Mammary epithelial cell (primary cell): ENCODE measurements at regions of chr16 and their contacts with region 1.

Region 1: GRCh38 chr16:15949210-15950160 is at the start of gene ABCC1:
- DNase-seq: peak; percentile 38
- H3K4me3 ChIP-seq: peak within 1 kb of the TSS; percentile 71 to 90 (median 79)
- H3K27ac ChIP-seq: peak within 1 kb of the TSS; percentile 87
- H3K4me1 ChIP-seq: peaks cover 27% of the 10 kb centered on the region
- H3K27me3 ChIP-seq: no peaks in the 10 kb centered on the region
- CTCF ChIP-seq: no peak
- total RNA-seq, gene ABCC1: 45.5 to 47.2 TPM

Region 2: GRCh38 chr16:16021988-16022682 is 72.7 kb after region 1 on chr16:
- CTCF ChIA-PET with region 1: no interaction called
- dilution Hi-C with region 1: no loop called
- in situ Hi-C with region 1: no loop called
- intact Hi-C with region 1: loop called (anchors 5 kb)
- DNase-seq: peak; percentile 93
- H3K4me3 ChIP-seq: no peak overlapping the region
- H3K27ac ChIP-seq: peak overlapping the region; percentile 62
- H3K4me1 ChIP-seq: peaks cover 29% of the 10 kb centered on the region
- H3K27me3 ChIP-seq: no peaks in the 10 kb centered on the region
- CTCF ChIP-seq: no peak